A673 (cell line): ENCODE measurements at regions of chr5 and their contacts with region 1.

Region 1: DNA sequence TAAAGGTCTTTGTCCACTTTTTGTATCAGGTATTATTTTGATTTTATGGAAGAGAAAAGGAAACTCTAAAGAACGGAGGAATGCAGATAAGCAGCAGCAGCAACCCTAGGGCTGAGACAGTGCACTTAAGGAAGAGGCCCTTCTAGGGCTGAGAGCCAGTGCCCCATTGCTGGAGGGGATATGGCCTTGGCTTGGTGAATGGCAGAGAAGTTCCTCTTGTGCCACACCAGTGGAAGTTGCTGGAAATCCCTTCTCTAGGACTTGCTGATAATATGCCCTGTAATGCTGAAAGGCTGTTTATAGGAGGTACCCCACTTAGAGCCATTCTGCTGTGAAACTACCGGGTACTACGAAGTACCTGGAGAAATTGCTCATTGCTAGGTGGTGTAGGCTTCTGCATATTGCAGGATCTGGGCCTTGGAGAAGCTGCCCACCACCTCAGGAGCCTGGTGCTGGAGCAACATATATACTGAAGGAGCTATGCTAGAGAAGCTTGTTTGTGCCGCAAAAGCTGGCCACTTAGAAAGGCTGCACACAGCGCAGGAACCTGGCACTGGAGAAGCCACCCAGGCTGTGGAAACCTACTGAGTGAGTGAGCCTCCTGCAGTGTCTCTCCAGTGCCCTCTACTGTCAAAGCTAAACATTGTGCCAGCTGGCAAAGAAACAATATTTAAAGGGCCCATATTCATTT is 9.6 kb upstream of the UBTD2 start:
- DNase-seq: peak; percentile 81
- H3K4me3 ChIP-seq: no peak overlapping the region
- H3K27ac ChIP-seq: no peak overlapping the region
- H3K4me1 ChIP-seq: peaks cover 3% of the 10 kb centered on the region
- H3K27me3 ChIP-seq: no peaks in the 10 kb centered on the region
- CTCF ChIP-seq: peak; percentile 87

Region 2: GRCh38 chr5:171913987-171914273 is 379.3 kb before region 1 on chr5:
- CTCF ChIA-PET with region 1: no interaction called
- POLR2A ChIA-PET with region 1: no interaction called
- intact Hi-C with region 1: loop called (anchors 5 kb)
- DNase-seq: no peak
- H3K4me3 ChIP-seq: no peak overlapping the region
- H3K27ac ChIP-seq: no peak overlapping the region
- H3K4me1 ChIP-seq: no peaks in the 10 kb centered on the region
- H3K27me3 ChIP-seq: no peaks in the 10 kb centered on the region
- CTCF ChIP-seq: no peak

Region 3: GRCh38 chr5:172106511-172107356 is 186.5 kb before region 1 on chr5:
- CTCF ChIA-PET with region 1: interaction called, 3 read pairs
- POLR2A ChIA-PET with region 1: no interaction called
- intact Hi-C with region 1: loop called (anchors 1 kb)
- DNase-seq: peak; percentile 62
- H3K4me3 ChIP-seq: peak overlapping the region; percentile 39
- H3K27ac ChIP-seq: no peak overlapping the region
- H3K4me1 ChIP-seq: peaks cover 3% of the 10 kb centered on the region
- H3K27me3 ChIP-seq: no peaks in the 10 kb centered on the region
- CTCF ChIP-seq: peak; percentile 94